ENCODE measurements at regions of chr14 and their contacts with region 1.

Region 1: DNA sequence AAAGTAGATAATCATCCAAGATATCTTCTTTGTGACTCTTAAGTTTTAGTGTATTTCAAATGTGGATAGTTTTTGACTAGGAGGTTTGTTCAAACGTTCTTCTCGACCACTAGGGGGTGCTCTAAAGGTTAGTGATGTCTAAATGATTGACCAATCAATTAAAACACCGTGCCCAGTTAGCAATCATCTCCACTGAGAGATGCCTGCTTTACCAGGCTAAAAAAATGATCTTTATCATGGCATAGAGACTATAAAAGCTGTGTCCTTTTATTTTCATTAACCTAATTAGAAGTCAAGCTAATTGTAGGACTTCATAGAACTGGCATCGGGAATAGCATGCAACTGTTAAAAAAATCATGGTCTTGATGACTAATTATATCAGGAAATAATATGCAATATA is 153.9 kb downstream of the PRKCH start:
- DNase-seq: peak; percentile 74
- H3K4me3 ChIP-seq: no peak overlapping the region
- H3K27ac ChIP-seq: peak overlapping the region; percentile 100
- H3K4me1 ChIP-seq: peaks cover 78% of the 10 kb centered on the region
- H3K27me3 ChIP-seq: no peaks in the 10 kb centered on the region
- CTCF ChIP-seq: peak; percentile 48 to 53
- POLR2A ChIP-seq: no peak

Region 2: DNA sequence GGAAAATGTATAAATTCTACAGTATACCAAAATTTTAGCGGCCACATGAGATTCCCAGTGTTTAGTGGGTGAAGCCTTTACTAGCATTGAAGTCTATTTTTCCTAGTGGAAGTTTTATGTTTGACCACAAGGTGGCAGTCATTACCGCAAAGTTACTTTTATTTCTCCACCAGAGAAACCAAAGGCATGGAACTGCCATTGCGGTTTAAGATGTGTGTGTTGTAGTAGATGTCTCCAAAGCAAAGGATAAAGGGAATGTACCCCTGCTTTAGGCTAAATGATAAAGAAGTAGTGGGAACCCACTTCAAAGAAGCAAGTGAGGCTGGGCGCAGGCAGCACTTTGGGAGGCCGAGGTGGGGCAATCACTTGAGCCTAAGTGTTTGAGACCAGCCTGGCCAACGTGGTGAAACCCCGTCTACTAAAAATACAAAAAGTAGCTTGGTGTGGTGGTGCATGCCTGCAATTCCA is 13.5 kb before region 1 on chr14:
- CTCF ChIA-PET with region 1: interaction called, 11 read pairs
- POLR2A ChIA-PET with region 1: no interaction called
- dilution Hi-C with region 1: no loop called
- intact Hi-C with region 1: no loop called
- DNase-seq: peak; percentile 80
- H3K4me3 ChIP-seq: no peak overlapping the region
- H3K27ac ChIP-seq: no peak overlapping the region
- H3K4me1 ChIP-seq: peaks cover 26% of the 10 kb centered on the region
- H3K27me3 ChIP-seq: no peaks in the 10 kb centered on the region
- CTCF ChIP-seq: peak; percentile 35 to 43
- POLR2A ChIP-seq: no peak

Region 3: DNA sequence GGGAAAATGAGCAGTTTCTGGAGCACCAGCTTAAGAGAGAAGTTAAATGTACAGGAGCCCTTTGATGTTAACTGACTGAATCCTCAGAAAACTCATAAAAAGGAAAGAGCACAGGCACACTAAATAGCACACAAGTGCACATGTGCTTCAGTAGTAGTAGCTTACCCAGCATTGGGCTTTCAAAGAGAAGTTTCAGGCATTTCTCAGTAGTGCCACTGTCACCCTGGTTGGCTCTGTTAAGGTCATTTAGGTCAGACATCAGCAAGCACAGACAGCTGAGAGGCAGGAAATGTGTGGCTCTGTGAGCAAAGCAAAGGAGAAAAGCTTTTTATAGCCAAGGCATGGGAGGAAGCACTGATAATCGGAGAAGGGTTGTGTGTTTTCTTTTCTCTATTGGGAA is 123.7 kb after region 1 on chr14:
- CTCF ChIA-PET with region 1: interaction called, 4 read pairs
- POLR2A ChIA-PET with region 1: no interaction called
- dilution Hi-C with region 1: no loop called
- intact Hi-C with region 1: loop called (anchors 2 kb)
- DNase-seq: peak; percentile 85
- H3K4me3 ChIP-seq: no peak overlapping the region
- H3K27ac ChIP-seq: peak overlapping the region; percentile 47
- H3K4me1 ChIP-seq: peaks cover 17% of the 10 kb centered on the region
- H3K27me3 ChIP-seq: no peaks in the 10 kb centered on the region
- CTCF ChIP-seq: no peak
- POLR2A ChIP-seq: no peak

Region 4: DNA sequence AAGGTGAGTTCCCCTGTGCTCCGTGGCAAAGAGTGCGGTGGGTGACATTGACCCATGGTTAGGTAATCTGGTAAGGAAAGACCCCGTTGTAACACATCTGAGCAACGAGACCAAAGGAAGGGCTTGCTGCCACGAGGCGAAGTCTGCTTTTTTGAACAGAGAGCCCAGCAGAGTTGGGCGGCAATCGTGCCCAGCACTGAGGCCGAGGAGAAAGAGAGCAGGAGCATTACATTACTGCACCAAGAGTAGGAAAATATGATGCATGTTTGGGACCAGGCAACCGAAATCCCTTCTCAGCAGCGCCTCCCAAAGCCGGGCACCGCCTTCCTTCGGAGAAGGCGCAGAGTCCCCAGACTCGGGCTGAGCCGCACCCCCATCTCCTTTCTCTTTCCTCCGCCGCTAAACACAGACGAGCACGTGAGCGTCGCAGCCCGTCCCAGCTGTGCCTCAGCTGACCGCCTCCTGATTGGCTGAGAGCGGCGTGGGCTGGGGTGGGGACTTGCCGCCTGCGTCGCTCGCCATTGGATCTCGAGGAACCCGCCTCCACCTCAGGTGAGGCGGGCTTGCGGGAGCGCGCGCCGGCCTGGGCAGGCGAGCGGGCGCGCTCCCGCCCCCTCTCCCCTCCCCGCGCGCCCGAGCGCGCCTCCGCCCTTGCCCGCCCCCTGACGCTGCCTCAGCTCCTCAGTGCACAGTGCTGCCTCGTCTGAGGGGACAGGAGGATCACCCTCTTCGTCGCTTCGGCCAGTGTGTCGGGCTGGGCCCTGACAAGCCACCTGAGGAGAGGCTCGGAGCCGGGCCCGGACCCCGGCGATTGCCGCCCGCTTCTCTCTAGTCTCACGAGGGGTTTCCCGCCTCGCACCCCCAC is 219.7 kb after region 1 on chr14 and contains the start of gene HIF1A:
- CTCF ChIA-PET with region 1: interaction called, 5 read pairs
- POLR2A ChIA-PET with region 1: interaction called, 5 read pairs
- dilution Hi-C with region 1: no loop called
- intact Hi-C with region 1: loop called (anchors 1 kb)
- DNase-seq: peak; percentile 99
- H3K4me3 ChIP-seq: peak within 1 kb of the TSS; percentile 88 to 100 (median 99)
- H3K27ac ChIP-seq: peak within 1 kb of the TSS; percentile 84
- H3K4me1 ChIP-seq: peaks cover 30% of the 10 kb centered on the region
- H3K27me3 ChIP-seq: no peaks in the 10 kb centered on the region
- CTCF ChIP-seq: peak in 1 of 2 donors; percentile 12
- POLR2A ChIP-seq: peak; percentile 97
- total RNA-seq, gene HIF1A: 179 and 180 TPM in 2 replicates

Region 5: GRCh38 chr14:61761959-61762786 is 286.9 kb after region 1 on chr14 and contains the start of gene SNAPC1:
- CTCF ChIA-PET with region 1: interaction called, 5 read pairs
- POLR2A ChIA-PET with region 1: interaction called, 6 read pairs
- dilution Hi-C with region 1: no loop called
- intact Hi-C with region 1: loop called (anchors 1 kb)
- DNase-seq: peak; percentile 98
- H3K4me3 ChIP-seq: peak within 1 kb of the TSS; percentile 63 to 86 (median 83)
- H3K27ac ChIP-seq: peak within 1 kb of the TSS; percentile 66
- H3K4me1 ChIP-seq: peaks cover 29% of the 10 kb centered on the region
- H3K27me3 ChIP-seq: no peaks in the 10 kb centered on the region
- CTCF ChIP-seq: no peak
- POLR2A ChIP-seq: peak; percentile 89
- total RNA-seq, gene SNAPC1: 12.7 and 21.8 TPM in 2 replicates

Measured in endothelial cell of umbilical vein (primary cell).